CD4-positive, alpha-beta T cell (primary cell): ENCODE measurements at regions of chr16 and their contacts with region 1.

Region 1: DNA sequence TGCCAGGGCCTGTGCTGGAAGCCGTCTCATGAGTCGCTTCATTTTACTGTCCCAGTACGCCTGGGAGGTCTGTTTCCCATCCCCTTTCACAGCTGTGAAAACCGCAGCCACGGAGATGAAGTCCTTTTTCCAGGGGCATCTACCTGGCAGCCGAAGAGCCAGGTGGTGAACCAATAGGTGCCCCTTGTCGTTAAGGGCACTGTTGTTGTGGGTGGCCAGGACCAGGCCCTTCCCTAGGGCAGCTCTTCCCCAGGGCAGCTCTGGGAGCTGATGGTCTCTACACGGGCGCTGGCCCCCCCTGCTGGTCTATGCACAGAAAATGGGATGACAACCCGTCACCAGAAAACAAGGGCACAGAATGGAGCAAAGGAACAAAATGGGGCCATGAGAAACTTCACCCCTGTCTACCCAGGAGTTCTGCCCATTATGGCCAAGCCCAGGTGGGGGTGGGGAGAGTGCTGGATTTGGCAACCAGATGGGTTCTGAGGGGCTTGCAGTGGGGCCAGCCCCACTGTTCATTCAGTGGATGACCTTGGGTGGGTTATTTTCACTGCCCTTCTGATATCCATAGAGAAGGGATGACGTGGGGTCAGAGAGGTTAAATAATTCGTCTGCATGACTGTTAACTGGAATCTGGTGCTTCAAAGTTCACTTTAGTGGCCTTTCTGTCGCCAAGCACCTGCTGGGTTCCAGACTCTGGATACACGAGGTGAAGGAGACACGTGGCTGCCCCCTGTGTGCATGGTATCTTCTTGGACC is 11.5 kb downstream of the RMI2 start:
- DNase-seq: peak in 13 of 14 experiments; percentile 33 to 76 (median 48)
- ATAC-seq: no peak
- H3K4me3 ChIP-seq: no peak overlapping the region
- H3K4me3 Mint-ChIP-seq: peak overlapping the region; percentile 42
- H3K27ac ChIP-seq: no peak overlapping the region
- H3K27ac Mint-ChIP-seq: peak overlapping the region; percentile 93
- H3K4me1 ChIP-seq: peaks cover 53% of the 10 kb centered on the region
- H3K4me1 Mint-ChIP-seq: peaks cover 76% of the 10 kb centered on the region
- H3K27me3 ChIP-seq: peaks cover 0 to 4% of the 10 kb centered on the region in 2 experiments
- H3K27me3 Mint-ChIP-seq: no peaks in the 10 kb centered on the region
- CTCF ChIP-seq: peak; percentile 61

Region 2: GRCh38 chr16:10971560-10971961 is 385.2 kb before region 1 on chr16:
- CTCF ChIA-PET with region 1: interaction called, 3 read pairs
- POLR2A ChIA-PET with region 1: no interaction called
- intact Hi-C with region 1: loop called in 1 of 2 experiments (anchors 5 kb)
- DNase-seq: peak in 8 of 14 experiments; percentile 11 to 78 (median 44)
- ATAC-seq: peak; percentile 34
- H3K4me3 ChIP-seq: no peak overlapping the region
- H3K4me3 Mint-ChIP-seq: no peak overlapping the region
- H3K27ac ChIP-seq: no peak overlapping the region
- H3K27ac Mint-ChIP-seq: no peak overlapping the region
- H3K4me1 ChIP-seq: peaks cover 10% of the 10 kb centered on the region
- H3K4me1 Mint-ChIP-seq: peaks cover 21% of the 10 kb centered on the region
- H3K27me3 ChIP-seq: no peaks in the 10 kb centered on the region
- H3K27me3 Mint-ChIP-seq: no peaks in the 10 kb centered on the region
- CTCF ChIP-seq: peak; percentile 76

Region 3: GRCh38 chr16:11224096-11224893 is 132.5 kb before region 1 on chr16:
- CTCF ChIA-PET with region 1: no interaction called
- POLR2A ChIA-PET with region 1: interaction called, 7 read pairs
- intact Hi-C with region 1: loop called in 1 of 2 experiments (anchors 10 kb)
- DNase-seq: peak; percentile 23 to 92 (median 50)
- ATAC-seq: peak; percentile 51
- H3K4me3 ChIP-seq: peak overlapping the region; percentile 51
- H3K4me3 Mint-ChIP-seq: peak overlapping the region; percentile 84
- H3K27ac ChIP-seq: peak overlapping the region; percentile 91 to 92
- H3K27ac Mint-ChIP-seq: peak overlapping the region; percentile 99
- H3K4me1 ChIP-seq: peaks cover 46% of the 10 kb centered on the region
- H3K4me1 Mint-ChIP-seq: peaks cover 38% of the 10 kb centered on the region
- H3K27me3 ChIP-seq: no peaks in the 10 kb centered on the region
- H3K27me3 Mint-ChIP-seq: no peaks in the 10 kb centered on the region
- CTCF ChIP-seq: no peak

Region 4: GRCh38 chr16:11245988-11246387 is 110.8 kb before region 1 on chr16:
- CTCF ChIA-PET with region 1: no interaction called
- POLR2A ChIA-PET with region 1: no interaction called
- intact Hi-C with region 1: no loop called
- DNase-seq: no peak
- ATAC-seq: no peak
- H3K4me3 ChIP-seq: no peak overlapping the region
- H3K4me3 Mint-ChIP-seq: no peak overlapping the region
- H3K27ac ChIP-seq: no peak overlapping the region
- H3K27ac Mint-ChIP-seq: no peak overlapping the region
- H3K4me1 ChIP-seq: peaks cover 4% of the 10 kb centered on the region
- H3K4me1 Mint-ChIP-seq: peaks cover 8% of the 10 kb centered on the region
- H3K27me3 ChIP-seq: no peaks in the 10 kb centered on the region
- H3K27me3 Mint-ChIP-seq: no peaks in the 10 kb centered on the region
- CTCF ChIP-seq: no peak

Region 5: GRCh38 chr16:11297492-11298142 is 59.1 kb before region 1 on chr16:
- CTCF ChIA-PET with region 1: interaction called, 3 read pairs
- POLR2A ChIA-PET with region 1: interaction called, 11 read pairs
- intact Hi-C with region 1: no loop called
- DNase-seq: peak; percentile 51 to 85 (median 65)
- ATAC-seq: peak; percentile 93
- H3K4me3 ChIP-seq: peak overlapping the region; percentile 42
- H3K4me3 Mint-ChIP-seq: peak overlapping the region; percentile 82
- H3K27ac ChIP-seq: no peak overlapping the region
- H3K27ac Mint-ChIP-seq: peak overlapping the region; percentile 73
- H3K4me1 ChIP-seq: peaks cover 24% of the 10 kb centered on the region
- H3K4me1 Mint-ChIP-seq: peaks cover 33% of the 10 kb centered on the region
- H3K27me3 ChIP-seq: peaks cover 0 to 3% of the 10 kb centered on the region in 2 experiments
- H3K27me3 Mint-ChIP-seq: no peaks in the 10 kb centered on the region
- CTCF ChIP-seq: peak; percentile 39

Region 6: GRCh38 chr16:11328172-11329070 is 28.3 kb before region 1 on chr16:
- CTCF ChIA-PET with region 1: interaction called, 5 read pairs
- POLR2A ChIA-PET with region 1: no interaction called
- intact Hi-C with region 1: loop called in 1 of 2 experiments (anchors 2 kb)
- DNase-seq: peak in 13 of 14 experiments; percentile 22 to 71 (median 47)
- ATAC-seq: peak; percentile 80
- H3K4me3 ChIP-seq: peak overlapping the region; percentile 16
- H3K4me3 Mint-ChIP-seq: peak overlapping the region; percentile 31
- H3K27ac ChIP-seq: no peak overlapping the region
- H3K27ac Mint-ChIP-seq: peak overlapping the region; percentile 35
- H3K4me1 ChIP-seq: peaks cover 34% of the 10 kb centered on the region
- H3K4me1 Mint-ChIP-seq: peaks cover 27% of the 10 kb centered on the region
- H3K27me3 ChIP-seq: peaks cover 0 to 2% of the 10 kb centered on the region in 2 experiments
- H3K27me3 Mint-ChIP-seq: no peaks in the 10 kb centered on the region
- CTCF ChIP-seq: no peak

Region 7: GRCh38 chr16:11345040-11345862 is 11.5 kb before region 1 on chr16 and contains the start of gene RMI2:
- CTCF ChIA-PET with region 1: interaction called, 3 read pairs
- POLR2A ChIA-PET with region 1: interaction called, 13 read pairs
- intact Hi-C with region 1: no loop called
- DNase-seq: peak; percentile 90 to 98 (median 96)
- ATAC-seq: peak; percentile 100
- H3K4me3 ChIP-seq: peak within 1 kb of the TSS; percentile 64
- H3K4me3 Mint-ChIP-seq: peak within 1 kb of the TSS; percentile 90
- H3K27ac ChIP-seq: no peak within 1 kb of the TSS
- H3K27ac Mint-ChIP-seq: peak within 1 kb of the TSS; percentile 48
- H3K4me1 ChIP-seq: peaks cover 20% of the 10 kb centered on the region
- H3K4me1 Mint-ChIP-seq: peaks cover 31% of the 10 kb centered on the region
- H3K27me3 ChIP-seq: no peaks in the 10 kb centered on the region
- H3K27me3 Mint-ChIP-seq: no peaks in the 10 kb centered on the region
- CTCF ChIP-seq: no peak
- total RNA-seq, gene RMI2: 1.3 to 1.5 TPM

Region 8: DNA sequence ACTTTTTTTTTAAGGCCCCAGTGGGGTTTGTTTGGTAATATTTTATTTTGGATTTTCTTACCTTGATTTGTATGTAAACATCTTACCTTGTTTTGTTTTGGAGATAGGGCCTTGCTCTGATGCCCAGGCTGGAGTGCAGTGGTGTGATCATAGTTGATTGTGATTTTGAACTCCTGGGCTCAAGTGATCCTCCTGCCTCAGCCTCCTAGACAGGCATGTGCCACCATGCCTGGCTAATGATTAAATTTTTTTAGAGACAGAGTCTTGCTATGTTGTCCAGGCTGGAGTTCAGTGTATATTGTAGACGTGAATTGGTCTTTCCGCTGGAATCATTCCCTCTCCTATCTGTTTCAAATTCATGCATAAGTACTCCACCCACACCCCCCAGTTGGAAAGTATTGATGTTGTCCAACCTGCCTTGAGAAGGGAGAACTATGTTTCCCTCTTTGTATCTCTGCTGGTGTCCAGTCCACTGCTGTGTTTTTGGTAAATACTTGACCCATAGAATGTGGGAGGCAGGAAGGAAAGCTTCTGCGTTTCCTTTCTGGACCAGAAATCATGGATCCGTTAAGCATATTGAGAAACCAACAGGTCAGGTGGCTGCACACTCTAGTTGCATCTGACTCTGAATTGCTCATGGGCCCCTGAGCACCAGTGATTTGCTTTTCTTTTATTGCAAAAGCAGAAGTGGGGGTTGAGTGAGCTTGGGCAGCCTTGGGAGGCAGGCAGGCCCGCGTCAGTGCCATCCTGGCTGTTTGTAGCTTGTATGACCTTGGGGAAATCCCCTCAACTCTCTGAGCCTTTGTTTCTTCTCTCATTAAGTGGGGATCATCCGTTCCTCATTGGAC is 13.6 kb after region 1 on chr16:
- CTCF ChIA-PET with region 1: interaction called, 8 read pairs
- POLR2A ChIA-PET with region 1: interaction called, 9 read pairs
- intact Hi-C with region 1: loop called in 1 of 2 experiments (anchors 2 kb)
- DNase-seq: peak in 3 of 14 experiments; percentile 13 to 69 (median 68)
- ATAC-seq: peak; percentile 70
- H3K4me3 ChIP-seq: no peak overlapping the region
- H3K4me3 Mint-ChIP-seq: no peak overlapping the region
- H3K27ac ChIP-seq: no peak overlapping the region
- H3K27ac Mint-ChIP-seq: no peak overlapping the region
- H3K4me1 ChIP-seq: no peaks in the 10 kb centered on the region
- H3K4me1 Mint-ChIP-seq: peaks cover 9% of the 10 kb centered on the region
- H3K27me3 ChIP-seq: no peaks in the 10 kb centered on the region
- H3K27me3 Mint-ChIP-seq: no peaks in the 10 kb centered on the region
- CTCF ChIP-seq: no peak

Region 9: GRCh38 chr16:11497851-11498289 is 141.1 kb after region 1 on chr16:
- CTCF ChIA-PET with region 1: no interaction called
- POLR2A ChIA-PET with region 1: no interaction called
- intact Hi-C with region 1: no loop called
- DNase-seq: peak in 1 of 14 experiments; percentile 11
- ATAC-seq: no peak
- H3K4me3 ChIP-seq: no peak overlapping the region
- H3K4me3 Mint-ChIP-seq: no peak overlapping the region
- H3K27ac ChIP-seq: no peak overlapping the region
- H3K27ac Mint-ChIP-seq: peak overlapping the region; percentile 59
- H3K4me1 ChIP-seq: peaks cover 15% of the 10 kb centered on the region
- H3K4me1 Mint-ChIP-seq: peaks cover 31% of the 10 kb centered on the region
- H3K27me3 ChIP-seq: no peaks in the 10 kb centered on the region
- H3K27me3 Mint-ChIP-seq: no peaks in the 10 kb centered on the region
- CTCF ChIP-seq: no peak